ENCODE measurements at regions of chr7 and their contacts with region 1.

Region 1: GRCh38 chr7:146557971-146558469 is 441.4 kb downstream of the CNTNAP2 start:
- DNase-seq: no peak
- ATAC-seq: no peak
- H3K4me3 ChIP-seq: no peak overlapping the region
- H3K27ac ChIP-seq: no peak overlapping the region
- H3K4me1 ChIP-seq: no peaks in the 10 kb centered on the region
- H3K27me3 ChIP-seq: no peaks in the 10 kb centered on the region
- CTCF ChIP-seq: no peak
- POLR2A ChIP-seq: no peak

Region 2: DNA sequence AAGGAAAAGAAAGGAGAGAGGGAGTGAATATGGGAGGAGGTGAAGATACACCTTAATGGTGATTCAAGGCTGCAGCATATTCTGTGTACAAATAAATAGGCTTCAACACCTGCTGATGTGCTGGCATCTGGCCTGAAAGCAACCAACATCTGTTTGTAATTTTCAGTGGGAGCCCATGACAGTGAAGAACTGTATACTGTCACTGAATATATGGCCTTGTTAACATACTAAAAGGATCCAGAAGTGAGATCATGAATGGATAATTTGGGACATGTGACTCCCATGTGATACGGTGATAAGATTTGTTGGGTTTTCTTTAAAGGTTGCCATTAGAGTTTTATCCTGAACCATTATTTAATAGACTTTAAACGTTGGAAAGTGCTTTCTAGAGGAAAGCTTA is 17.9 kb after region 1 on chr7:
- intact Hi-C with region 1: loop called in 1 of 10 experiments (anchors 2 kb)
- DNase-seq: no peak
- ATAC-seq: no peak
- H3K4me3 ChIP-seq: no peak overlapping the region
- H3K27ac ChIP-seq: no peak overlapping the region
- H3K4me1 ChIP-seq: no peaks in the 10 kb centered on the region
- H3K27me3 ChIP-seq: no peaks in the 10 kb centered on the region
- CTCF ChIP-seq: no peak
- POLR2A ChIP-seq: no peak

Measured in heart left ventricle (tissue), 16 donors.